Naive thymus-derived CD4-positive, alpha-beta T cell (primary cell): ENCODE measurements at regions of chr2 and their contacts with region 1.

Region 1: DNA sequence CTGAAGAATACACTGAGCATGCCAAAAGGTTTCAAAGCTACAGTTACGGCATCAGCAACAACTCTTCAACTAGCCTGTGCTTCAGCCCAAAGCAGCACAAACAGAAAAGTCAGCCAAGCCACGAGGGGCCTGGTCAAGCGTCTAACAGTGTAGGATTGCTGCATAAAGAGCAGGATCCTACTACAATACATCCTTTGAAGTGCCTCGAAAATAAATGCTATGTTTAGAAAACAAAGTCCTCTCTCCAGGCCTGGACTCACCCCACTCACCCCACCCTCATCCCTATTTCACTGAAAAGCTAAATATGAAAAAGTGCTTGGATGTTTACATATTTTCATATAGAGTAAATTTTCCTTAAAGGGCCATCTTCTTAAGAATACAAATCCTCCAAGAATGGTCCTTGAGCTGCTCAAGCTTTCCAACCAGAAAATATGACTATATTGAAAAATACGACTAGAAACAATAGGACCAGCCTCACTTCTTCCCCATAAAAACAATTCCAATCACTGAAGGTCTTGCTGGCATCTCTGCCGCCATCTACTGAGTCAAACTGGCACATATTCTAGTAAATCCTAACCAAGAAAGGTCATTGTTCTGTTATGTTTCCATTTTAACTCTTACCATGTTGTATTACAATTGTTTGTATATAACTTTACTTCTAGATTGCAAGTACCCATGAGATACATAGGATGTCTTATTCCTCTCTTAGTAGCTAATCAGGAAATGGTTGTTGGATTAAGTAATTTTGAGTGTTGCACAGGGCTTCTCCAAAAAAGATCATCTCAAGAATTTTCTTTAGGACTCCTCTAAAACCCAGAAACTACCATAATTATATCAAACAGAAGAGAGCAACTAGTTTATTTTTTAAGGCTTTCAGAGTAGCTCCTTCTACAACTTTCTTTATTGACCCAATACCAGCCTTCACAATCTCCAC is 63.6 kb downstream of the CLHC1 start:
- DNase-seq: peak in 7 of 9 donors; percentile 21 to 53 (median 40)
- ATAC-seq: peak; percentile 78
- H3K4me3 ChIP-seq: no peak overlapping the region
- H3K4me3 Mint-ChIP-seq: no peak overlapping the region
- H3K27ac ChIP-seq: no peak overlapping the region
- H3K27ac Mint-ChIP-seq: no peak overlapping the region
- H3K4me1 ChIP-seq: no peaks in the 10 kb centered on the region
- H3K4me1 Mint-ChIP-seq: peaks cover 0 to 6% (median 0%) of the 10 kb centered on the region in 7 donors
- H3K27me3 ChIP-seq: no peaks in the 10 kb centered on the region
- H3K27me3 Mint-ChIP-seq: no peaks in the 10 kb centered on the region

Region 2: DNA sequence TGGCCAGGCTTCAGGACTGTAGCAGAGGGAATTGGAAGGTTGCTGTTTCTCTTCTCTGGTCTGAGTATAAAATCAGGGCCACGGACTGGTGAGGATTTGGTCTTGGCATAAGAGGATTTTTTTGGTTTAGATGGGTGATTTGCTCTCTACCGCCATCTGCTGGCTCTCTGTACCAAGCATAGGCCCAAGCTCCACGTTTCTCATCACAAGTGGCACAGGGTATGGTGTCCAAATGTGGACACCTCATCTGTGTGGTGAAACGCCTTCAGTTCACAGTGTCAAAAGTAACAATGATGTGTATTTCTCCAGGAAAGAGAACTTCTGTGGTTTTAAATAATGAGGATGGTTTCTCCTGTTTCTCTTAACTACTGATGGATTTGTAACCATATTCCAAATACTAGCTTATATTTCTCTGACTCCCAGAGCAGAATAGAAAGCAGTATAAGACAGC is 329.9 kb before region 1 on chr2:
- CTCF ChIA-PET with region 1: interaction called, 10 read pairs
- POLR2A ChIA-PET with region 1: no interaction called
- intact Hi-C with region 1: loop called in 1 of 2 experiments (anchors 1 kb)
- DNase-seq: peak; percentile 25 to 61 (median 45)
- ATAC-seq: peak; percentile 87
- H3K4me3 ChIP-seq: no peak overlapping the region
- H3K4me3 Mint-ChIP-seq: no peak overlapping the region
- H3K27ac ChIP-seq: no peak overlapping the region
- H3K27ac Mint-ChIP-seq: no peak overlapping the region
- H3K4me1 ChIP-seq: no peaks in the 10 kb centered on the region
- H3K4me1 Mint-ChIP-seq: no peaks in the 10 kb centered on the region
- H3K27me3 ChIP-seq: no peaks in the 10 kb centered on the region
- H3K27me3 Mint-ChIP-seq: peaks cover 0 to 2% (median 0%) of the 10 kb centered on the region in 5 donors

Region 3: GRCh38 chr2:54899576-54900200 is 268.8 kb before region 1 on chr2:
- CTCF ChIA-PET with region 1: interaction called, 38 read pairs
- POLR2A ChIA-PET with region 1: no interaction called
- intact Hi-C with region 1: loop called (anchors 1 to 2 kb)
- DNase-seq: peak in 5 of 9 donors; percentile 6 to 40 (median 16)
- ATAC-seq: peak; percentile 31
- H3K4me3 ChIP-seq: no peak overlapping the region
- H3K4me3 Mint-ChIP-seq: no peak overlapping the region
- H3K27ac ChIP-seq: no peak overlapping the region
- H3K27ac Mint-ChIP-seq: peak overlapping the region in 4 of 9 donors; percentile 9 to 89 (median 72)
- H3K4me1 ChIP-seq: peaks cover 10 to 19% of the 10 kb centered on the region in 2 donors
- H3K4me1 Mint-ChIP-seq: peaks cover 13 to 32% (median 29%) of the 10 kb centered on the region in 7 donors
- H3K27me3 ChIP-seq: no peaks in the 10 kb centered on the region
- H3K27me3 Mint-ChIP-seq: no peaks in the 10 kb centered on the region

Region 4: GRCh38 chr2:55010149-55010591 is 158.3 kb before region 1 on chr2:
- CTCF ChIA-PET with region 1: interaction called, 83 read pairs
- POLR2A ChIA-PET with region 1: interaction called, 4 read pairs
- intact Hi-C with region 1: loop called (anchors 1 kb)
- DNase-seq: peak; percentile 15 to 71 (median 60)
- ATAC-seq: peak; percentile 94
- H3K4me3 ChIP-seq: peak overlapping the region; percentile 58
- H3K4me3 Mint-ChIP-seq: peak overlapping the region; percentile 88 to 97 (median 92)
- H3K27ac ChIP-seq: peak overlapping the region; percentile 68
- H3K27ac Mint-ChIP-seq: peak overlapping the region; percentile 82 to 96 (median 90)
- H3K4me1 ChIP-seq: peaks cover 27 to 29% of the 10 kb centered on the region in 2 donors
- H3K4me1 Mint-ChIP-seq: peaks cover 44 to 91% (median 79%) of the 10 kb centered on the region in 7 donors
- H3K27me3 ChIP-seq: no peaks in the 10 kb centered on the region
- H3K27me3 Mint-ChIP-seq: no peaks in the 10 kb centered on the region

Region 5: GRCh38 chr2:55014962-55015939 is 153.2 kb before region 1 on chr2:
- CTCF ChIA-PET with region 1: interaction called, 83 read pairs
- POLR2A ChIA-PET with region 1: interaction called, 4 read pairs
- intact Hi-C with region 1: loop called (anchors 1 kb)
- DNase-seq: peak in 7 of 9 donors; percentile 13 to 56 (median 41)
- ATAC-seq: peak; percentile 60
- H3K4me3 ChIP-seq: no peak overlapping the region
- H3K4me3 Mint-ChIP-seq: no peak overlapping the region
- H3K27ac ChIP-seq: no peak overlapping the region
- H3K27ac Mint-ChIP-seq: peak overlapping the region in 3 of 9 donors; percentile 0 to 47 (median 14)
- H3K4me1 ChIP-seq: peaks cover 9 to 10% of the 10 kb centered on the region in 2 donors
- H3K4me1 Mint-ChIP-seq: peaks cover 19 to 66% (median 41%) of the 10 kb centered on the region in 7 donors
- H3K27me3 ChIP-seq: no peaks in the 10 kb centered on the region
- H3K27me3 Mint-ChIP-seq: no peaks in the 10 kb centered on the region

Region 6: DNA sequence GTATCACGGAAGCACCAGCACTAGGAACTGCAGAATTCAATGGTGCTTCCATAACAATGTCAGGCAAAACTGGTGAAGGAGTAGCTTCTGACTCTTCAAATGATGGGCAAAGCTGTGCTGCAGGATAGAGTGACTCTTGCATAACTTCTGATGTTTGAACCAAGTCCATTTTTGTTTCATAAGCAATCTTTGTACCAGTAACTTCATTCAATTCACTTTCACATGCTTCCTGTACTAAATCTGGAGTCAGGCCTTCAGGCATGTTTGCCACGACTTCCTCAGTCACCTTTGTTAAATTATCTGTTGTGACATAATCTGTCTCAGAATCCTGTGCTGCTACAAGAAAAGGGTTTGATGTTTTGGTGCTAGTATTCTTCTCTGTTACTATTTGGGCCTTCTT is 142.3 kb before region 1 on chr2:
- CTCF ChIA-PET with region 1: interaction called, 83 read pairs
- POLR2A ChIA-PET with region 1: no interaction called
- intact Hi-C with region 1: no loop called
- DNase-seq: peak in 2 of 9 donors; percentile 30 to 37
- ATAC-seq: no peak
- H3K4me3 ChIP-seq: no peak overlapping the region
- H3K4me3 Mint-ChIP-seq: no peak overlapping the region
- H3K27ac ChIP-seq: no peak overlapping the region
- H3K27ac Mint-ChIP-seq: no peak overlapping the region
- H3K4me1 ChIP-seq: peaks cover 26 to 47% of the 10 kb centered on the region in 2 donors
- H3K4me1 Mint-ChIP-seq: peaks cover 4 to 12% (median 10%) of the 10 kb centered on the region in 7 donors
- H3K27me3 ChIP-seq: no peaks in the 10 kb centered on the region
- H3K27me3 Mint-ChIP-seq: no peaks in the 10 kb centered on the region

Region 7: DNA sequence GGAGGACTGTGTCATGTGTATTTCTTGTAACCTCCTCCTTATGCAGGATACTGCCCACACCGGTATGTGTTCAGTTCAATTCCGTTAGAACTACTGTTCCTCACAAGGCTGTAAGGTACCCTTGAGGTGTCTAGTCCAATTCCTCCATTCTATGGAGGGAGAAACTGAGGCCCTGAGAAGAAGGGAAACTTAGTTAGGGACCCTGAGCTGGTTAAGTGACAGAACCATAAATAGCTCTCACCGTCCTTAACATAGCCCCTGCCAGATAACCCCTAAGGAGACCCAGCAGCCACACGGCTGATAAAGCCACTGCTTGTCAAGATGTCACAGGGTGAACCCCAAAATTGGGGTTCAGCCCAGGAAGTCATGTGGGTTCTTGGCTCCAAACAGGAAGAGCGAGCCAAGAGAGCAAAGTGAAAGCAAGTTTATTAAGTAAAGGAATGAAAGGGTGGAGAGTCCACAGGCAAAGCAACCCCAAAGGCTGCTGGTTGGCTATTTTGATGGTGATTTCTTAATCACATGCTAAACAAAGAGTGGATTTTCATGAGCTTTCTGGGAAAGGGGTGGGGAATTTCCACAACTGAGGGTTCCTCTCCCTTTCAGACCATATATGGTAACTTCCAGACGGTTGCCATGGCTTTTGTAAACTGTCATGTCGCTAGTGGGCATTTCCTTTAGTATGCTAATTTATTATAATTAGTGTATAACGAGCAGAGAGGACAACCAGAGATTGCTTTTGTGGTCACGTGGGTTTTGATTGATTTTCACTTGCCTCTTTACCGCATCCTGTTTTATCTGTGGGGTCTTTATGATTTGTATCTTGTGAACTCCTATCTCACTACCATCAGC is 34.8 kb before region 1 on chr2:
- CTCF ChIA-PET with region 1: interaction called, 3 read pairs
- POLR2A ChIA-PET with region 1: no interaction called
- intact Hi-C with region 1: loop called in 1 of 2 experiments (anchors 5 kb)
- DNase-seq: peak; percentile 17 to 78 (median 52)
- ATAC-seq: peak; percentile 91
- H3K4me3 ChIP-seq: peak overlapping the region; percentile 55
- H3K4me3 Mint-ChIP-seq: peak overlapping the region; percentile 83 to 94 (median 88)
- H3K27ac ChIP-seq: peak overlapping the region; percentile 76
- H3K27ac Mint-ChIP-seq: peak overlapping the region; percentile 91 to 98 (median 97)
- H3K4me1 ChIP-seq: peaks cover 14 to 22% of the 10 kb centered on the region in 2 donors
- H3K4me1 Mint-ChIP-seq: peaks cover 19 to 49% (median 39%) of the 10 kb centered on the region in 7 donors
- H3K27me3 ChIP-seq: no peaks in the 10 kb centered on the region
- H3K27me3 Mint-ChIP-seq: no peaks in the 10 kb centered on the region